ENCODE measurements at regions of chr4 and their contacts with region 1.

Region 1: GRCh38 chr4:102868781-102869568 is at the start of gene CISD2:
- DNase-seq: peak; percentile 93
- H3K4me3 Mint-ChIP-seq: peak within 1 kb of the TSS; percentile 90
- H3K27ac Mint-ChIP-seq: peak within 1 kb of the TSS; percentile 99
- H3K4me1 Mint-ChIP-seq: peaks cover 48% of the 10 kb centered on the region
- H3K27me3 Mint-ChIP-seq: no peaks in the 10 kb centered on the region
- total RNA-seq, gene CISD2: 50.8 and 51.4 TPM in 2 replicates

Region 2: DNA sequence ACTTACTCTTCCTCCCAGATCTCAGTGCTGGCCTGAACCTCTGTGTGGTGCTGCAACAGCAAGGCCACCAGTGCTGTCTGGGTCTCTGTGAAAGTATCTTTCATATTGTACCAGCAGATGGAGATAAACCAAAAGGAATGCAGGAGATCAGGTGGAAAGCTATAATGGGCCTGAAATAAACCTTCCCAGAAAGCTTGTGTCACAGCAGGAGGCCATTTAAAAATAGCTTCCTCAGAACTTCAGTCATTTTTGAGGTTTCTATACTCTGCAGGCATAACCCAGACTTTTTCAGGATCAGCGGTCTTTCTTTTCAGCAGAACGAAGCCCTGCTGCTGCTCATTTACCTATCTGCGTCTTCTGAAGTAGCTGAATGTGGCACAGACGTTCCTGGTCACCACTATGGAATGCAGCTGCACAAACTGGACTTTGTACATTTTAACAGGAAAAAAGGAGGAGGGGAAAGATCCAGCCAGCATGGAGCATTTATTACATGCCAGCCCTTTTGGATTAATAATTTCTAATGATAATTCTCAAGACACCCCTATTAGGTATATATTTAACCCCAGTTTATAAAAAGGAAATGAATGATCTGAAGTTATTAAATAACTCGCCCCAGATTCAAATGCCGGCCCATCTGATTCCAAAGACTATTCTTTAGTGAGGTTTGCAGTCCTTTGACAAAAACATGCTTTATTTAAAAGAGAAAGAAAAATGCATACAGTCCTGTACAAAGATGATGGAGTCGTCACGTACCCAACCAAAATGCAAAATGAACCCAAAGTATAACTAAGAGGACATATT is 248.1 kb before region 1 on chr4:
- intact Hi-C with region 1: loop called (anchors 5 kb)
- DNase-seq: no peak
- H3K4me3 Mint-ChIP-seq: no peak overlapping the region
- H3K27ac Mint-ChIP-seq: peak overlapping the region; percentile 58
- H3K4me1 Mint-ChIP-seq: peaks cover 49% of the 10 kb centered on the region
- H3K27me3 Mint-ChIP-seq: no peaks in the 10 kb centered on the region

Region 3: DNA sequence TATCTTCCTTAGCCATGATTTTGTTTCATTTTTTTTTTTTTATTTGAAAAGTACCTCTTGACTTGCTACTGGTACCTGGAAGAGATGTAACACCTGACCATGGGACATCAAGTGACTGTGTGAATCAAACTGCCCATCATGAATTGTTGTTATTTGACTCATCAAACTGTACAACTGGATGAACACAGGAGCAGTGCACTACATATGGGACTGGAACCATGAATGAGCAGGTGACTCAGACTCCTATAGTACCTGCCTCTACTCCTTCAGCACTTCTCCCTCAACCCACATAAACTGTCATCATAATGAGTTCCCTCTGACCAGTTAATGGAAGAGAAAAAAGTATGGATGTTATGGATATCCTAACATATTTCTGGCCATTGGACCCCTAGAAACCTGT is 25.7 kb before region 1 on chr4:
- intact Hi-C with region 1: loop called (anchors 2 kb)
- DNase-seq: no peak
- H3K4me3 Mint-ChIP-seq: no peak overlapping the region
- H3K27ac Mint-ChIP-seq: no peak overlapping the region
- H3K4me1 Mint-ChIP-seq: peaks cover 11% of the 10 kb centered on the region
- H3K27me3 Mint-ChIP-seq: no peaks in the 10 kb centered on the region

Region 4: DNA sequence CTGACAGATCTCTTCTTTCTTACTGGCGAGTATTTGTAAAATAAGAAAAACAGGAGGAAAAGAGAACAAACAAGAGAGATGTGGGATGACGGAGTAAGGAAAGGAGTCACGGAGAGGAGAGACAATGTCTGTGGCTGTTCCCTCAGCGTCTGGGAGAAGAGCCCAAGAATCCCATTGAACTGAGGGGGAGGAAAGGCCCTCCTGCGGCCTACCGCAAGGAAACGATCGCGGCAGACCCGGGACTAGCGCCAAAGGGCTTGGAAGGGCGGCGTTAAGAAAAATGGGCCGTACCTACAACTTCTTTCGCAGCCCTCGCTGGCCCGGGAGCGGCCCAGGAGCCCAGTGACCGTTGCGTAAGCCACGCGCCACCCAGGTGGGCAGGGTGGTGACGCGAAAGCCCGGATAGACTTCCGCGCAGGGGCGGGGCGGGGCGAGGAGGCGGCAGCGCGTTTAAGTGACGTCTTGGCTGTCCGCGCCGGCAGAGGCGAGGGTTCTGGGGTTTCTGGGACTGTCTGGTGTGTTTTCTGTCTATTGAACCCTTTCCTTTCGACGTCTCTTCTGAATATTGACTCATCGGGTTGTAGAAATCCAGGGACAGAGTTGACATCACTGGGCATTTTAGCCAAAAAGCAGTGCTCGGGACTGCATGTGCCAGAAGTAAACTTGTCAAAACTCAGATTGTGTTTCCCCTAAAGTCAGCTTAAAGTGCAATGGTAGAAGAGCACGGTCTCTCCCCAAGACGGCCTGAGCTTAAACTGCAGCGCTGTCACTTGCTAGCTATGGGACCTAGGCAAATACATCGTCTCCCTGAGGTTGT is 150.5 kb after region 1 on chr4 and contains the start of gene SLC9B1:
- intact Hi-C with region 1: loop called (anchors 1 kb)
- DNase-seq: peak; percentile 92
- H3K4me3 Mint-ChIP-seq: peak within 1 kb of the TSS; percentile 87
- H3K27ac Mint-ChIP-seq: peak within 1 kb of the TSS; percentile 94
- H3K4me1 Mint-ChIP-seq: peaks cover 18% of the 10 kb centered on the region
- H3K27me3 Mint-ChIP-seq: no peaks in the 10 kb centered on the region
- total RNA-seq, gene SLC9B1: 0.28 and 0.57 TPM in 2 replicates

Region 5: DNA sequence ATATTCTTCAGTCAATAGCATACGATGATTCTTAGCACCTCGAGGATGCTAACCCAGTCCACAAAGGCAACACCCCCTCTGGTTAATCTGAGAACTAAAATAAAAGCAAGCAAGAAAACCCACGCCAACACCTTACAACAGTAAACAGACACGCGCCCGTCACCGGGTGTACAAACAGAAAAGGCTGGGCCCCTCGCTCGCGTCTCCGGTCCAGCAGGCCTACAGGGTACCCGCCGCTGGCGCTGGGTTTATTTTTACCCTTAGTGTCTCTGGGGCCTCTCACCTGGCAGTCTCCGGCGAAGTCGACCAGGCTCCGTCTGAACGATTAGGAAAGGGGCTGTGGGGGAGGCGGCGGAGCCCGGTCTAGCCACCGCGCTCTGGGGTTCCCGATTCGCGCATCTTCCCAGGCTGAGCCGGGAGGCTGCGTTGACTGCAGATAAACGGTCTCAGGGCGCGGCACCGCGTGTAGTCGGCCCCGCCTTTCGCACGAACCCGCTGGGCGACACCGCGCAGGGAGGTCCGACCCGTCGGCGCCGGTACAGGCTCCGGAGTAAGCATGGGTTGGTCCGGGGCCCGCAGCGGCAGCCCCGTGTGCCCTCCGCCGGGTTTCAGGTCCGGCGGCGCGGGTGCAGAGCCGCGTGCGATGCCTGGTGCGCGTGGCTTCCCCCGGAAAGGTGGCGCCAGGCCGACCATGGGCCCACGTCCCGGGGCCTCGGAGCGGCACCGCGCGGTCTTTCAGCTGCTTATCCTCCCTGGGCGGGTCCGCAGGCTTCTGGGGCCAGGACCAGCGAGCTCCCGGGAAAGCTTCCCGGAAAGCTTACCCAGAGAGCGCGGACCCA is 207.1 kb after region 1 on chr4:
- intact Hi-C with region 1: loop called (anchors 5 kb)
- DNase-seq: peak; percentile 66
- H3K4me3 Mint-ChIP-seq: peak overlapping the region; percentile 90
- H3K27ac Mint-ChIP-seq: peak overlapping the region; percentile 98
- H3K4me1 Mint-ChIP-seq: peaks cover 45% of the 10 kb centered on the region
- H3K27me3 Mint-ChIP-seq: no peaks in the 10 kb centered on the region

Region 6: DNA sequence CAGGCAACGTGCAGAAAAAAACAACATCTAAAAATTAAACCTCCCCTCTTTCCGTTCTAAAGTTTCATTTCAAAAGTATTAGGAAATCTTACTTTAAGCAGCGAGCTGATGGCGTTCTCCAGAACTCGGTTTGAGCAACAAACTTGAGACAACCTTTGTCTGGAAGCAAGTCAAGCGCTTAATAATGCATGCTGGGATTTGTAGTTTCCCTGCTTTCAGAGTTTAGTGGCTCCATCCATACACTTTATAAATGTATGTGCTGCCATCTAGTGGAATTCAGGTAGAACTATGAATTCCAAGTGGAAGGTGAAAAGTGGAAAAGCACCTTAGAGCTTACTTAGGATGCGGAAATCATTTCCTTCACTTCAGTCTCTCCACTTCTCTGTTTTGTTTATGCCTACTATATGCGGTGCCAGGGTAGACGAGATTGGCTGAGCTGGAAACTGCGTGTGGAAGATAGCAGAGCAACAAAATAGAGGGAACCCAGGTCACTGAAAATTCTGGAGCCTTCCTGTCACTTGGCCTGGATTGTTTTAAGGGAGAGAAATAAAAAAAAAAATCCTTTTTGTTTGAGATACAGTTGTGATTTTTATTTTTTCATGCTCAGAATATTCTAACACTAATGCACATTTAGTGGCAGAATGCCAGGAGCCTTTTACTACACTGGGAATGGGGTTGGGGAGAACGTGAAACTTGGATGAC is 230.9 kb after region 1 on chr4 and contains the start of gene BDH2:
- intact Hi-C with region 1: loop called (anchors 2 kb)
- DNase-seq: peak; percentile 31
- H3K4me3 Mint-ChIP-seq: peak within 1 kb of the TSS; percentile 85
- H3K27ac Mint-ChIP-seq: peak within 1 kb of the TSS; percentile 85
- H3K4me1 Mint-ChIP-seq: peaks cover 20% of the 10 kb centered on the region
- H3K27me3 Mint-ChIP-seq: no peaks in the 10 kb centered on the region
- total RNA-seq, gene BDH2: 16.0 and 16.3 TPM in 2 replicates

Measured in activated T-helper 2 cell treated with anti-CD3 and anti-CD28 coated beads, Interferon-gamma antibody, Interleukin-2, Interleukin-4, amounts not matched to agents 10 μg/mL and 5 μg/mL and 100 μg/mL, durations not matched to agents 14 hours and 24 hours and 36 hours (primary cell).